ENCODE measurements at regions of chr5 and their contacts with region 1.

Region 1: GRCh38 chr5:59810041-59810440 is 83.5 kb downstream of the PDE4D start:
- DNase-seq: peak in 1 of 2 donors; percentile 84
- H3K4me3 ChIP-seq: peak overlapping the region in 1 of 2 donors; percentile 42
- H3K27ac ChIP-seq: no peak overlapping the region
- H3K4me1 ChIP-seq: peaks cover 0 to 3% of the 10 kb centered on the region in 2 donors
- H3K27me3 ChIP-seq: no peaks in the 10 kb centered on the region
- CTCF ChIP-seq: peak; percentile 65 to 90 (median 88)

Region 2: DNA sequence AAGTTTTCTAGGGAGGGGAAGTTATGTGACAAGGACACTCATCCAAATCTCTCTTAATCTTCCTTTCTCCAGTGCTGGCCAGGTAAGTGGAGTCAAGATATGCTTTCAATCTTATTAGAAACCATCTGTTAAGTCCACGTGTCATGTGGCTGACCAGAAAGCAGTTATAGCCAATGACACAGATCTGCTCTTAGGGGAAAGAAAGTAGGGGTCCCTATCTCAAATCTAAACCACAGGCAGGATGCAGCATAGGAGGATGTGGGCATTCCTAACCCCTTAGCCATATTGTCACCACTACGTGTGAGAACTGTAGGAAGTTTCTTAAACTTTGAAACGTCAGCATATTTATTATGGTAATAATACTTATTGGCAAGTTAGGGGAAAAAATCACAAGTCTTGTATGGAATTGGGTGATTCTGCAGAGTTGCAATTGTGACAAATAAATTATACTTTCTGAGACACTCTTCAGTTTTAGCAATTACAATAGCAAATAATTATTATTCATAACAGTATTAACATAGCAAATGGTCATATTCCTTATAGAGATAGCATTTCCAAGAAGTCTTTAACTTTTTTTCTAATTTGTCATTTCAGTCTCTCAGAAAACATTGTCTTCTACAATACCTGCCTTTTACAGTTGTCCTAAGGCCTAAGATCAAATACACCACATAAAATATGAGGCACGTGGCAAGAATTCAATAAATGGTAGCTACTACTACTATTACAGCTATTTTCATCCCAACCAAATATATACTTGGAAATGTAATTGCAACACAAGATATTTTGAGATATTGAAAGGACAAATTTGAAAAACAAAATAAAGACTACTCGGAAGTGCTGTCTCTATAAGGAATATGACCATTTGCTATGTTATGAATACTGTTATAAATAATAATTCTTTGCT is 153.4 kb before region 1 on chr5:
- intact Hi-C with region 1: no loop called
- DNase-seq: no peak
- H3K4me3 ChIP-seq: no peak overlapping the region
- H3K27ac ChIP-seq: no peak overlapping the region
- H3K4me1 ChIP-seq: peaks cover 0 to 5% of the 10 kb centered on the region in 2 donors
- H3K27me3 ChIP-seq: no peaks in the 10 kb centered on the region
- CTCF ChIP-seq: no peak

Region 3: GRCh38 chr5:60382716-60383115 is 572.7 kb after region 1 on chr5:
- intact Hi-C with region 1: loop called (anchors 2 kb)
- DNase-seq: no peak
- H3K4me3 ChIP-seq: no peak overlapping the region
- H3K27ac ChIP-seq: peak overlapping the region; percentile 68 to 69
- H3K4me1 ChIP-seq: peaks cover 7 to 28% of the 10 kb centered on the region in 2 donors
- H3K27me3 ChIP-seq: no peaks in the 10 kb centered on the region
- CTCF ChIP-seq: peak in 2 of 3 experiments; percentile 53 to 58

Region 4: DNA sequence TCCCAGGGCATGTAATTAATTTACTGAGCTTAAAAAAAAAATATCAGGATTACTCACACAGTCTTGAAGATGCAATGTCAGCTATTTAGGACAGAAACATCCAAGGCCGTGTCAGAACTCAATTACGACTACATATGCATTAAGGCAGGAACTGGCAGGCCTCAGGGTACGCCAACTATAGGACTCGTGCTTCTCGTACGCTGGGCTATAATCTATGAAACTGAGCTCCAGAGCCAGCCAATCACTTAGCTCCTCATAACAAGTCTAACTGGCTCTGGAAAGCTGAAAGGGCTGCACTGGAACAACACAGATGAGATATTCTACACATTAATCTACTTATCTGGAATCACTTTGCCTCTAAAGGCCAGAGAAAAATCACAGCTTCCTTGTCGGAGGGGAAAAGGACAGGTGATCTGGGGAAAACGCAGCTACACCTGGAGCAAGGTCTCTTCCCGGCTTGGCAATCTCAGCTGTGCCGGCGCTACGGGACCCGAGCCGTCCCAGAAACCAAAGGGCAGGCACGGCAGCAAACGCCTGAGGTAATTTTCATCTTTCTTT is 677.9 kb after region 1 on chr5:
- intact Hi-C with region 1: loop called (anchors 10 kb)
- DNase-seq: no peak
- H3K4me3 ChIP-seq: peak overlapping the region; percentile 40 to 69
- H3K27ac ChIP-seq: peak overlapping the region; percentile 67 to 84
- H3K4me1 ChIP-seq: peaks cover 0 to 4% of the 10 kb centered on the region in 2 donors
- H3K27me3 ChIP-seq: no peaks in the 10 kb centered on the region
- CTCF ChIP-seq: no peak

Region 5: GRCh38 chr5:60649283-60649917 is 839.4 kb after region 1 on chr5:
- intact Hi-C with region 1: loop called (anchors 5 kb)
- DNase-seq: no peak
- H3K4me3 ChIP-seq: no peak overlapping the region
- H3K27ac ChIP-seq: no peak overlapping the region
- H3K4me1 ChIP-seq: no peaks in the 10 kb centered on the region
- H3K27me3 ChIP-seq: no peaks in the 10 kb centered on the region
- CTCF ChIP-seq: peak; percentile 7 to 62 (median 49)

Measured in ascending aorta (tissue), 2 donors.